GM12878 (cell line): ENCODE measurements at regions of chr3 and their contacts with region 1.

Region 1: DNA sequence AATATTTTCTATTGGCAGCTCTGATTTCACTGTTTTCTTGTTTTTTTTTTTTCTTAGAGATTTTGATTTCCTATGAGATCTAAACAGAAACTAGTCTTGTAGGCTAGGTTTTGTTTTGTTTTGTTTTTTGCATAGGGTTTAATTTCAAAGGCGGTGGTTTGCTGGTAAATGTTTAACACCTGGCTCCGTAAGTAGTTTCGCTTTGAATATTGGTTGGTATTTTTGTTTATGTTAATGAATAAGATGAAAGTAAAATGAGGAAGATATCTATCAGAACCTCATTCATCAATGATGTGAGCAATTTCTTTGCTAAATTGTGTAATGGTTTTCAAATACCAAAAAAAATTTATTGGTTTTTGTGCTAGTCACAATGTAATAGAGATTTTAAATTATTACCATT is 39.7 kb upstream of the TM4SF1 start:
- DNase-seq: peak; percentile 58
- ATAC-seq: peak; percentile 85
- H3K4me3 ChIP-seq: no peak overlapping the region
- H3K27ac ChIP-seq: no peak overlapping the region
- H3K4me1 ChIP-seq: no peaks in the 10 kb centered on the region
- H3K27me3 ChIP-seq: no peaks in the 10 kb centered on the region
- CTCF ChIP-seq: no peak
- EP300 ChIP-seq: peak; percentile 66 to 67; a peak in 1 of 4 replicates
- POLR2A ChIP-seq: no peak
- RAD21 ChIP-seq: no peak

Region 2: GRCh38 chr3:149258298-149258697 is 158.9 kb before region 1 on chr3:
- CTCF ChIA-PET with region 1: no interaction called
- POLR2A ChIA-PET with region 1: no interaction called
- RAD21 ChIA-PET with region 1: no interaction called
- SMC1A ChIA-PET with region 1: no interaction called
- in situ Hi-C with region 1: no loop called
- intact Hi-C with region 1: no loop called
- DNase-seq: no peak
- ATAC-seq: no peak
- H3K4me3 ChIP-seq: no peak overlapping the region
- H3K27ac ChIP-seq: no peak overlapping the region
- H3K4me1 ChIP-seq: no peaks in the 10 kb centered on the region
- H3K27me3 ChIP-seq: peaks cover 0 to 1% of the 10 kb centered on the region in 2 experiments; a peak in 1 of 4 replicates
- CTCF ChIP-seq: no peak
- EP300 ChIP-seq: no peak
- POLR2A ChIP-seq: no peak
- RAD21 ChIP-seq: no peak

Region 3: GRCh38 chr3:149442851-149443544 is 25.8 kb after region 1 on chr3:
- CTCF ChIA-PET with region 1: interaction called, 5 read pairs
- POLR2A ChIA-PET with region 1: interaction called, 5 read pairs
- RAD21 ChIA-PET with region 1: interaction called, 7 read pairs
- SMC1A ChIA-PET with region 1: interaction called, 14 read pairs
- in situ Hi-C with region 1: no loop called
- intact Hi-C with region 1: no loop called
- DNase-seq: peak; percentile 35
- ATAC-seq: peak; percentile 84
- H3K4me3 ChIP-seq: no peak overlapping the region
- H3K27ac ChIP-seq: no peak overlapping the region
- H3K4me1 ChIP-seq: no peaks in the 10 kb centered on the region
- H3K27me3 ChIP-seq: no peaks in the 10 kb centered on the region; a peak in 1 of 4 replicates
- CTCF ChIP-seq: no peak
- EP300 ChIP-seq: no peak; a peak in 1 of 4 replicates
- POLR2A ChIP-seq: no peak
- RAD21 ChIP-seq: no peak

Region 4: GRCh38 chr3:149752051-149752787 is 335.0 kb after region 1 on chr3 and contains the start of gene COMMD2:
- CTCF ChIA-PET with region 1: no interaction called
- POLR2A ChIA-PET with region 1: no interaction called
- RAD21 ChIA-PET with region 1: no interaction called
- SMC1A ChIA-PET with region 1: no interaction called
- in situ Hi-C with region 1: no loop called
- intact Hi-C with region 1: no loop called
- DNase-seq: peak; percentile 84
- ATAC-seq: peak; percentile 100
- H3K4me3 ChIP-seq: peak within 1 kb of the TSS; percentile 85
- H3K27ac ChIP-seq: peak within 1 kb of the TSS; percentile 54
- H3K4me1 ChIP-seq: no peaks in the 10 kb centered on the region
- H3K27me3 ChIP-seq: no peaks in the 10 kb centered on the region
- CTCF ChIP-seq: peak; percentile 21 to 47 (median 46); a peak in 5 of 6 replicates
- EP300 ChIP-seq: no peak
- POLR2A ChIP-seq: peak; percentile 95
- RAD21 ChIP-seq: peak; percentile 40
- polyA plus RNA-seq, gene COMMD2: 59.4 to 97.0 TPM